ENCODE measurements at regions of chr16 and their contacts with region 1.

Region 1: GRCh38 chr16:11350921-11351335 is 5.7 kb downstream of the RMI2 start:
- DNase-seq: no peak
- ATAC-seq: no peak
- H3K4me3 ChIP-seq: no peak overlapping the region
- H3K4me3 Mint-ChIP-seq: no peak overlapping the region
- H3K27ac ChIP-seq: no peak overlapping the region
- H3K27ac Mint-ChIP-seq: no peak overlapping the region
- H3K4me1 ChIP-seq: peaks cover 27 to 40% of the 10 kb centered on the region in 2 donors
- H3K4me1 Mint-ChIP-seq: peaks cover 72% of the 10 kb centered on the region
- H3K27me3 ChIP-seq: no peaks in the 10 kb centered on the region
- H3K27me3 Mint-ChIP-seq: no peaks in the 10 kb centered on the region
- CTCF ChIP-seq: no peak

Region 2: GRCh38 chr16:11045846-11046245 is 305.1 kb before region 1 on chr16:
- CTCF ChIA-PET with region 1: no interaction called
- POLR2A ChIA-PET with region 1: no interaction called
- intact Hi-C with region 1: no loop called
- DNase-seq: no peak
- ATAC-seq: no peak
- H3K4me3 ChIP-seq: no peak overlapping the region
- H3K4me3 Mint-ChIP-seq: no peak overlapping the region
- H3K27ac ChIP-seq: no peak overlapping the region
- H3K27ac Mint-ChIP-seq: no peak overlapping the region
- H3K4me1 ChIP-seq: no peaks in the 10 kb centered on the region
- H3K4me1 Mint-ChIP-seq: peaks cover 2% of the 10 kb centered on the region
- H3K27me3 ChIP-seq: no peaks in the 10 kb centered on the region
- H3K27me3 Mint-ChIP-seq: no peaks in the 10 kb centered on the region
- CTCF ChIP-seq: no peak

Region 3: GRCh38 chr16:11268921-11269375 is 82.0 kb before region 1 on chr16 and contains the start of gene TNP2:
- CTCF ChIA-PET with region 1: interaction called, 7 read pairs
- POLR2A ChIA-PET with region 1: interaction called, 12 read pairs
- intact Hi-C with region 1: no loop called
- DNase-seq: no peak
- ATAC-seq: no peak
- H3K4me3 ChIP-seq: no peak within 1 kb of the TSS
- H3K4me3 Mint-ChIP-seq: no peak within 1 kb of the TSS
- H3K27ac ChIP-seq: no peak within 1 kb of the TSS
- H3K27ac Mint-ChIP-seq: no peak within 1 kb of the TSS
- H3K4me1 ChIP-seq: peaks cover 7% of the 10 kb centered on the region in 2 donors
- H3K4me1 Mint-ChIP-seq: peaks cover 8% of the 10 kb centered on the region
- H3K27me3 ChIP-seq: no peaks in the 10 kb centered on the region
- H3K27me3 Mint-ChIP-seq: no peaks in the 10 kb centered on the region
- CTCF ChIP-seq: no peak
- total RNA-seq, gene TNP2: not detected in 2 replicates

Measured in B cell (primary cell).